HEK293 (cell line): ENCODE measurements at regions of chr3 and their contacts with region 1.

Region 1: GRCh38 chr3:123723522-123724168 is 138.8 kb upstream of the HACD2 start:
- H3K4me3 ChIP-seq: no peak overlapping the region
- H3K27ac ChIP-seq: no peak overlapping the region
- H3K4me1 ChIP-seq: no peaks in the 10 kb centered on the region
- CTCF ChIP-seq: 0 out of 2 replicates have a peak, but pooled peaks have one; percentile 29

Region 2: DNA sequence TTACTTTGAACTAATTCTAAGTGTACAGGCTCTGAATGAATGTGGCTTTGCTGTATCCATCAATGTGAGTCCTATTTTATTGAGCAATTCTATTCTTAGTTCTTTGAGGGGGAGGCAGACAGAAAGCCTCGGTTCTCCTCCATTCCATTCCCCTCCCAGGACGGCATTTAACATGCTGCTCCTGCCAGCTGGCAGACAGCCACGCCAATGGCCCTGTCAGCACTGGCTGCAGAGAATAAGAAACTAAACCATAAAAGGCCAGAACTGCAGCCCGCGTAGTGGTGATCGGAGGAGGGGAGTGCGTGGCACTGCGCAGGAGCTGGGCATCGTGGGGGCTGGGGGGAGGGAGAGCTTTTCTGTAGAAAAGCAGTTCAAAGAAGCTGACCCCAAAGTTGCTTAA is 62.7 kb before region 1 on chr3:
- CTCF ChIA-PET with region 1: interaction called, 12 read pairs
- POLR2A ChIA-PET with region 1: no interaction called
- H3K4me3 ChIP-seq: no peak overlapping the region
- H3K27ac ChIP-seq: no peak overlapping the region
- H3K4me1 ChIP-seq: no peaks in the 10 kb centered on the region; the same call in 1 of the 2 replicates
- CTCF ChIP-seq: no peak

Region 3: GRCh38 chr3:123706871-123707270 is 16.8 kb before region 1 on chr3:
- CTCF ChIA-PET with region 1: interaction called, 14 read pairs
- POLR2A ChIA-PET with region 1: no interaction called
- H3K4me3 ChIP-seq: no peak overlapping the region
- H3K27ac ChIP-seq: no peak overlapping the region
- H3K4me1 ChIP-seq: no peaks in the 10 kb centered on the region
- CTCF ChIP-seq: no peak

Region 4: DNA sequence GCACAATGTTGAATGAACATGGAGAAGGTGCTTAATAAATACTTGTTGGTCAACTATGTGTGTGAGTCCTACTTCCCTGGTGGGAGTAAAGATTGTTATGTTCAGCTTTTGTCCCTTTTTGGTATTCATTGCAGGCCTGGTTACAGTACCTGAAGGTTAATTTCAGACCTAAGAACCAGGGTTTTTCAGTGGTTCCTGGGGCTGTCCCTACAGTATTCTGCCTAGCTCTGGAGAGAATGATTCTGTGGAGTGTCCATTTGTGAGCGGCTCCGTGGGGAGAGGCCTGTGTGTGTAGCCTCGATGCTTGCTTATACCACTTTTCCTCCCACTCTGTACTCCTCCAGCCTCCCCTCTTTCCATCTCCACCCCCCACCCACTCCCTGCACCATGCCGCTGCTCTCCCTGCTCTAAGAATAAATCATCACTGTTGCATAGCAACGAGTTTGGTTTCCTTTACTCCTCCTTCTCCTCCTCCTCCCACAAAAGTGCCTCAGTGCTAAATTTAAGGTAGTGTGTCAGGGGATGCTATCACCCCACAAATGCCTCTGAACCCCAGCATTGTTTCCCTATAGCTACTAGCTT is 418.8 kb after region 1 on chr3:
- CTCF ChIA-PET with region 1: no interaction called
- POLR2A ChIA-PET with region 1: no interaction called
- H3K4me3 ChIP-seq: no peak overlapping the region
- H3K27ac ChIP-seq: no peak overlapping the region
- H3K4me1 ChIP-seq: no peaks in the 10 kb centered on the region
- CTCF ChIP-seq: no peak